Activated CD8-positive, alpha-beta T cell treated with anti-CD3 and anti-CD28 coated beads, Interleukin-2, amount 10 ng/mL, durations not matched to agents 7 days and 5 days (primary cell): ENCODE measurements at regions of chr11 and their contacts with region 1.

Region 1: GRCh38 chr11:118295834-118296454 is 8.6 kb upstream of the CD3E start:
- DNase-seq: peak; percentile 62
- ATAC-seq: peak; percentile 64
- H3K4me3 Mint-ChIP-seq: no peak overlapping the region
- H3K27ac Mint-ChIP-seq: no peak overlapping the region
- H3K4me1 Mint-ChIP-seq: peaks cover 22% of the 10 kb centered on the region
- H3K27me3 Mint-ChIP-seq: no peaks in the 10 kb centered on the region

Region 2: GRCh38 chr11:118145285-118146227 is 150.4 kb before region 1 on chr11:
- CTCF ChIA-PET with region 1: interaction called, 12 read pairs
- POLR2A ChIA-PET with region 1: no interaction called
- DNase-seq: peak; percentile 92
- ATAC-seq: peak; percentile 97
- H3K4me3 Mint-ChIP-seq: peak overlapping the region; percentile 79
- H3K27ac Mint-ChIP-seq: no peak overlapping the region
- H3K4me1 Mint-ChIP-seq: peaks cover 19% of the 10 kb centered on the region
- H3K27me3 Mint-ChIP-seq: peaks cover 54% of the 10 kb centered on the region

Region 3: GRCh38 chr11:118180300-118180703 is 115.6 kb before region 1 on chr11:
- CTCF ChIA-PET with region 1: interaction called, 11 read pairs
- POLR2A ChIA-PET with region 1: no interaction called
- DNase-seq: peak; percentile 30
- ATAC-seq: peak; percentile 51
- H3K4me3 Mint-ChIP-seq: no peak overlapping the region
- H3K27ac Mint-ChIP-seq: no peak overlapping the region
- H3K4me1 Mint-ChIP-seq: peaks cover 6% of the 10 kb centered on the region
- H3K27me3 Mint-ChIP-seq: peaks cover 21% of the 10 kb centered on the region

Region 4: GRCh38 chr11:118240999-118241768 is 54.8 kb before region 1 on chr11:
- CTCF ChIA-PET with region 1: interaction called, 11 read pairs
- POLR2A ChIA-PET with region 1: interaction called, 3 read pairs
- DNase-seq: peak; percentile 81
- ATAC-seq: peak; percentile 89
- H3K4me3 Mint-ChIP-seq: peak overlapping the region; percentile 71
- H3K27ac Mint-ChIP-seq: peak overlapping the region; percentile 88
- H3K4me1 Mint-ChIP-seq: peaks cover 92% of the 10 kb centered on the region
- H3K27me3 Mint-ChIP-seq: no peaks in the 10 kb centered on the region

Region 5: GRCh38 chr11:118258410-118258809 is 37.5 kb before region 1 on chr11:
- CTCF ChIA-PET with region 1: interaction called, 46 read pairs
- POLR2A ChIA-PET with region 1: no interaction called
- DNase-seq: peak; percentile 42
- ATAC-seq: no peak
- H3K4me3 Mint-ChIP-seq: no peak overlapping the region
- H3K27ac Mint-ChIP-seq: no peak overlapping the region
- H3K4me1 Mint-ChIP-seq: peaks cover 56% of the 10 kb centered on the region
- H3K27me3 Mint-ChIP-seq: no peaks in the 10 kb centered on the region

Region 6: DNA sequence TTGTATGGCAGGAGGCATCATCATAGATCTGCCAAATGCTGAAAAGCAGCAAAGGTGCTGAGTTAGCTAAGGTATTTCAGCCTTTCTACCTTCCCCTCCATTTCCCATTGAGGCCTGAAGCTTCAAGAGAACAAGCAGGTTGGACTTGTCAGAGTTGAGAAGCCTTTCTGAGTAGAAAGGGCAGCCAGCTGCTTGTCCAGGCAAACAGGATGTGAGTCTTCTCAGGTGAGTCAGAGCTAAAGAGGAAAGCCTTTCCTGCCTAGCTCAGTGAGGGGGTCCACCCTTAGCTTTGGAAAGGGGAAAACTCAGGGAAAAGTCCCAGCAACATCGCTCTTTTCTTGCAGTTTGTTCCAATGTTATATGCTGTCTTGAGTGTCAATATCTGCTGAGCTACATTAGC is 18.6 kb before region 1 on chr11:
- CTCF ChIA-PET with region 1: interaction called, 132 read pairs
- POLR2A ChIA-PET with region 1: no interaction called
- DNase-seq: peak; percentile 43
- ATAC-seq: peak; percentile 55
- H3K4me3 Mint-ChIP-seq: no peak overlapping the region
- H3K27ac Mint-ChIP-seq: no peak overlapping the region
- H3K4me1 Mint-ChIP-seq: peaks cover 53% of the 10 kb centered on the region
- H3K27me3 Mint-ChIP-seq: no peaks in the 10 kb centered on the region

Region 7: DNA sequence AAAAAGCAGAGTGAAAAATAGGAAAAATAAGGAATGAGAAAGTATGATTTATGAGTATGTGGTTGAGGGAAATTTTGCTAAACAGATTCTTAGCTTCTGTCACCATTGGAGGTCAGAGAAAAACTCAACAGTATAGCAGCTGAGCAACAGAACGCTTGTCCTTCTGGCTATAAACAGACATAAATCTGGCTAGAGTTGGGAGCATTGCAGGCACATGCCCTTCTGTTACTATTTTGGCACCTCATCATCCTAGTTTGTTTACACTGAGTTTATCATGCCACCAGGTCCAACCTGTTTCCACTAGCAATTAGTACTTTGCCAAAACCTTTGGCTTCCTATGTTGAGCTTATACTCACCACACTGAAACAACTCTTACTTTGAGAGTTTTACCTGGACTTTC is 70.3 kb after region 1 on chr11:
- CTCF ChIA-PET with region 1: interaction called, 12 read pairs
- POLR2A ChIA-PET with region 1: no interaction called
- DNase-seq: no peak
- ATAC-seq: no peak
- H3K4me3 Mint-ChIP-seq: no peak overlapping the region
- H3K27ac Mint-ChIP-seq: no peak overlapping the region
- H3K4me1 Mint-ChIP-seq: peaks cover 27% of the 10 kb centered on the region
- H3K27me3 Mint-ChIP-seq: no peaks in the 10 kb centered on the region